Activated CD4-positive, alpha-beta memory T cell treated with anti-CD3 and anti-CD28 coated beads for 36 hours (primary cell): ENCODE measurements at regions of chr14 and their contacts with region 1.

Region 1: DNA sequence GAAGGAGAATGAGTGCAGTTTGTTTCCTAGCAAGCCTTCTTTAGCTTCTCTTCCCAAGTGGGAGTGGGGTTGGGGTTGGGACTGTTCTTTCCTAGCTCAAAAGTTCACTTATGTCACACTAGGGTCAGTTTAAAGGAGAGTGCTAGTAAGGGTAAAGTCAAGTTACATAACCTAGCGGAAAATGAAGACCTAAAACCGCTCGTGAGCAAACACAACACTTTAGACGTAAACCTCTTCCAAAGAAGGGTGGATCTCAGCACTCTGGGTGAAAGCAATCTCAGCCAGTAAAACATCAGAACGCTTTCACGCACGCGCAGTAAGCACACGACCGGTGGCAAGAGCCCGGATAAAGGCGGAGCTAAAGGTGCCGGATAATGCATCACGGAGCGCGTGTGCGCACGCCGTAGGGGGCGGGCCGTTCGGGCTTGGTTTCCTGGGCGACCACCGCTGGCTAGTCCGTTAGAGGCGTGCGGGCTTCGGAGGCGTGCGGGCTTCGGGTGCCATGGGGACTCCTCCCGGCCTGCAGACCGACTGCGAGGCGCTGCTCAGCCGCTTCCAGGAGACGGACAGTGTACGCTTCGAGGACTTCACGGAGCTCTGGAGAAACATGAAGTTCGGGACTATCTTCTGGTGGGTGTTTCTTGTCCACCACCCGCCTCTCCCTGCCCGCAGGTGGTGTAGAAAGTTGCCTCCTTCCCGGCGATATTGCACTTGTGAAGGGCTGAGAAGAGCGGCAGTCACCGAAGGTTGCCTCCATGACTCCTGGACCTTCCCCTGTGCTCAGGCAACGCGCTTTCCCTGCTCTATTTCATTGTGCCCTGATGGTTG is at the start of gene SNAPC1:
- DNase-seq: peak; percentile 98
- H3K4me3 Mint-ChIP-seq: peak within 1 kb of the TSS; percentile 95
- H3K27ac Mint-ChIP-seq: peak within 1 kb of the TSS; percentile 95
- H3K4me1 Mint-ChIP-seq: peaks cover 42% of the 10 kb centered on the region
- H3K27me3 Mint-ChIP-seq: no peaks in the 10 kb centered on the region
- total RNA-seq, gene SNAPC1: 9.1 TPM

Region 2: DNA sequence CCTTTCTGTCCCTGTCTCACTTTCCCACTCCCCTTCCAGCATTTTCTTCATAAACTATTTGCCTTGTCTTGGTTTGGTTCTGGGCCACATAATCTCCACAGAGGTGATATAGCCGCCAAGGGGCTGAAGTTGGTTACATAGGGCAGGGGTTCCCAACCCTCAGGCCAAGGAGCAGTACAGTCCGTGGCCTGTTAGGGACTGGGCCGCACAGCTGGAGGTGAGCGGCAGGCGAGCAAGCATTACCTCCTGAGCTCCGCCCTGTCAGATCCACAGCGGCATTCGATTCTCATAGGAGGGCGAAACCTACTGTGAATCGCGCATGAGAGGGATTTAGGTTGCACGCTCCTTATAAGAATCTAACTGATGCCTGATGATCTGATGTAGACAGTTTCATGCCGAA is 147.5 kb before region 1 on chr14:
- CTCF ChIA-PET with region 1: no interaction called
- POLR2A ChIA-PET with region 1: no interaction called
- intact Hi-C with region 1: no loop called
- DNase-seq: no peak
- H3K4me3 Mint-ChIP-seq: no peak overlapping the region
- H3K27ac Mint-ChIP-seq: no peak overlapping the region
- H3K4me1 Mint-ChIP-seq: peaks cover 31% of the 10 kb centered on the region
- H3K27me3 Mint-ChIP-seq: no peaks in the 10 kb centered on the region

Region 3: GRCh38 chr14:61750708-61751474 is 11.3 kb before region 1 on chr14:
- CTCF ChIA-PET with region 1: interaction called, 7 read pairs
- POLR2A ChIA-PET with region 1: interaction called, 8 read pairs
- intact Hi-C with region 1: loop called (anchors 1 kb)
- DNase-seq: peak; percentile 89
- H3K4me3 Mint-ChIP-seq: peak overlapping the region; percentile 85
- H3K27ac Mint-ChIP-seq: peak overlapping the region; percentile 84
- H3K4me1 Mint-ChIP-seq: peaks cover 21% of the 10 kb centered on the region
- H3K27me3 Mint-ChIP-seq: no peaks in the 10 kb centered on the region

Region 4: GRCh38 chr14:61780125-61780524 is 18.0 kb after region 1 on chr14:
- CTCF ChIA-PET with region 1: no interaction called
- POLR2A ChIA-PET with region 1: no interaction called
- intact Hi-C with region 1: loop called (anchors 2 kb)
- DNase-seq: peak; percentile 27
- H3K4me3 Mint-ChIP-seq: no peak overlapping the region
- H3K27ac Mint-ChIP-seq: peak overlapping the region; percentile 58
- H3K4me1 Mint-ChIP-seq: peaks cover 22% of the 10 kb centered on the region
- H3K27me3 Mint-ChIP-seq: no peaks in the 10 kb centered on the region

Region 5: DNA sequence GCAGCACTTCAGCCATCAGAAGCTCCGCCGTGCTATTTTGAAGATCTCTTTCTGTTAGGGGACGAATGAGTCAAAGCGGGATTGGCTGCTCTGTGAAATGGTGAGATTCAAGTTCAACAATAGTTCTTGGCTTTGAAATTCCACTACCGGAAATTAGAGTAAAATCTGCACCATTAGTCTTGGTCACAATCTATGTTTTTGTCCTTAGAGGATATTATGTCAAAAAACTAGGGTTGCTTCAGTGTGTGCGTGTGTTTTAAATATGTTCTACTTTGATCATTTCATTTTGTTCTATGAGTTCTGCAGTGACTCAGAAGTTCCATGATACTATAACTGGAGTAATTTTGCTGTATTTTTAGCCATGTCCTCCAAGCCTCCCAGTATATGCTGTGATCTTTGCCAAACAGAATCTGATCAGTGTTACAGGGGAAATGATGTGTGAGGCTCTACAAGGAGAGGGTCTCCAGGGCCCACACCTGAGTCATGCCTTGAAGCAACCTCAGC is 1533.9 kb after region 1 on chr14:
- CTCF ChIA-PET with region 1: no interaction called
- POLR2A ChIA-PET with region 1: no interaction called
- intact Hi-C with region 1: loop called (anchors 10 kb)
- DNase-seq: peak; percentile 48
- H3K4me3 Mint-ChIP-seq: no peak overlapping the region
- H3K27ac Mint-ChIP-seq: no peak overlapping the region
- H3K4me1 Mint-ChIP-seq: peaks cover 13% of the 10 kb centered on the region
- H3K27me3 Mint-ChIP-seq: peaks cover 16% of the 10 kb centered on the region